Activated CD4-positive, alpha-beta T cell treated with anti-CD3 and anti-CD28 coated beads, Interleukin-2, amount 10 ng/mL, durations not matched to agents 24 days and 14 days (primary cell): ENCODE measurements at regions of chr4 and their contacts with region 1.

Region 1: GRCh38 chr4:129641179-129641578 is 545.2 kb downstream of the C4orf33 start:
- DNase-seq: peak; percentile 85
- H3K4me3 Mint-ChIP-seq: no peak overlapping the region
- H3K27ac Mint-ChIP-seq: no peak overlapping the region
- H3K4me1 Mint-ChIP-seq: no peaks in the 10 kb centered on the region
- H3K27me3 Mint-ChIP-seq: no peaks in the 10 kb centered on the region

Region 2: DNA sequence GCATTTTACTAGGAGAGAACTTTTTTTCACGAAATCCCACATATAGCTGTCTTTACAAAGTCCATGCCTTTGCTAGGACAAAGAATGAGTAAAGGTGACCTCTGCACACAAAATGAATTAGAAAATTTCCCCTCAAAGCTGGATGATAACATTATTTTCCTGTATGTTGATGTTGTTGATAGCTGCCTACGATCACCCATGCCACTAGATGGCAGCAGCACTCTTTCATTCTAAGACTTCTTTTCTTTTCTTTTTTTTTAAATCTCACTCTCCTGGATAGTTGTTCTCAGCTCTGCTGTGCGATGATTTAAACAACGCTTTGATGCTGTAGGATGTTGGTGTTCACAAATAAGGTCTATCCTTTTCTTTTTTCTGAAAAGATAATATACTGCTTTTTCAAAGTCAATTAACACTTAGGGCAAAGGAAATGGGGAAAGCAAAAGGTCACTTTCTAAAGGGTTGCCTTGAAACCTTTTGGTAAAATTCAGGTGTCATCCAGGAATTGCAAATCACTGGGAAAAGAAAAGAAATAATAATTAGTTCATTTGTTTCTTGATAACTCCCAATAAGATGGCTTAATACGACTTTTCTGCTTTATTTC is 278.4 kb before region 1 on chr4:
- intact Hi-C with region 1: loop called (anchors 1 kb)
- DNase-seq: peak; percentile 84
- H3K4me3 Mint-ChIP-seq: no peak overlapping the region
- H3K27ac Mint-ChIP-seq: no peak overlapping the region
- H3K4me1 Mint-ChIP-seq: no peaks in the 10 kb centered on the region
- H3K27me3 Mint-ChIP-seq: peaks cover 5% of the 10 kb centered on the region

Region 3: DNA sequence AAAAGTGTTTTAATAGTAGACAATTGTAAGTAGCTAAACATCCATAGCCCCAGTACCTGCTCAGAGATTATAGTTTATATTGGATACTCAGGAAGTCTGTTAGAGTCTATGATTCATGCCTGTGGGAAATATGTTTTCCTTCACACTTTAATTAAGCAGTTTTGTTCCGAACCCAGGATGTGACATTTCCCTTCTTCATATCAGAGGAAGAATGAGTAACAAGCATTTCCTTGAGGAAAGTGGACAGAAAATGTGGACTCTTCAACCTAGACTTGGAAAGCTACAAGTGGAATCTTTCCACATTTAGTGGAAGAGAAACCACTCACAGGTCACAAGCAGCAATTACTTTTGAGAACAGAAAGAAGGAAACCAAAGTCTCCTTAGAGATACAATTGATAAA is 125.8 kb before region 1 on chr4:
- intact Hi-C with region 1: no loop called
- DNase-seq: no peak
- H3K4me3 Mint-ChIP-seq: no peak overlapping the region
- H3K27ac Mint-ChIP-seq: no peak overlapping the region
- H3K4me1 Mint-ChIP-seq: no peaks in the 10 kb centered on the region
- H3K27me3 Mint-ChIP-seq: no peaks in the 10 kb centered on the region

Region 4: DNA sequence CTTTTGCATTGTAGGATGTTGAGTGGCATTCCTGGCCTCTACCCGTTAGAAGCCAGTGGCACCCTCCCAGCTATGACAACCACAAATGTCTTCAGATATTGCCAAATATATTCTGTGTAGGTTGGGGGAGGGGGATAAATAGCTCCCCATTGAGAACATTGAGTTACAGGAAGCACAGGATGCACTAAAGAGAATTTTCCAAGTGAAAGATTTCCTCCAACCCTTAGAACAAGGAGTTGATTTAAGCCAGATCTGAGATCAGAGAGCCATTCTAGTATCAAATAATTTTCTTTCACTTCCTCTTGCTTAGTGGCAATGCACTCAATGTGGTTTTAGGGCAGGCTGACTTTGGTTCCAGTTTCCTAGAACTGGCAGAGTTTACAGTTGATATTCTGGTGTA is 108.6 kb before region 1 on chr4:
- intact Hi-C with region 1: loop called (anchors 10 kb)
- DNase-seq: no peak
- H3K4me3 Mint-ChIP-seq: no peak overlapping the region
- H3K27ac Mint-ChIP-seq: no peak overlapping the region
- H3K4me1 Mint-ChIP-seq: peaks cover 5% of the 10 kb centered on the region
- H3K27me3 Mint-ChIP-seq: no peaks in the 10 kb centered on the region